Prostate gland (tissue), 2 donors: ENCODE measurements at regions of chr12 and their contacts with region 1.

Region 1: GRCh38 chr12:89709157-89709994 is 738 bp upstream of the ATP2B1 start:
- DNase-seq: peak; percentile 98
- H3K4me3 ChIP-seq: peak overlapping the region; percentile 64 to 96
- H3K27ac ChIP-seq: peak overlapping the region; percentile 95 to 98
- H3K4me1 ChIP-seq: no peaks in the 10 kb centered on the region
- H3K27me3 ChIP-seq: no peaks in the 10 kb centered on the region
- CTCF ChIP-seq: peak in 1 of 4 experiments; percentile 10
- POLR2A ChIP-seq: peak; percentile 96

Region 2: DNA sequence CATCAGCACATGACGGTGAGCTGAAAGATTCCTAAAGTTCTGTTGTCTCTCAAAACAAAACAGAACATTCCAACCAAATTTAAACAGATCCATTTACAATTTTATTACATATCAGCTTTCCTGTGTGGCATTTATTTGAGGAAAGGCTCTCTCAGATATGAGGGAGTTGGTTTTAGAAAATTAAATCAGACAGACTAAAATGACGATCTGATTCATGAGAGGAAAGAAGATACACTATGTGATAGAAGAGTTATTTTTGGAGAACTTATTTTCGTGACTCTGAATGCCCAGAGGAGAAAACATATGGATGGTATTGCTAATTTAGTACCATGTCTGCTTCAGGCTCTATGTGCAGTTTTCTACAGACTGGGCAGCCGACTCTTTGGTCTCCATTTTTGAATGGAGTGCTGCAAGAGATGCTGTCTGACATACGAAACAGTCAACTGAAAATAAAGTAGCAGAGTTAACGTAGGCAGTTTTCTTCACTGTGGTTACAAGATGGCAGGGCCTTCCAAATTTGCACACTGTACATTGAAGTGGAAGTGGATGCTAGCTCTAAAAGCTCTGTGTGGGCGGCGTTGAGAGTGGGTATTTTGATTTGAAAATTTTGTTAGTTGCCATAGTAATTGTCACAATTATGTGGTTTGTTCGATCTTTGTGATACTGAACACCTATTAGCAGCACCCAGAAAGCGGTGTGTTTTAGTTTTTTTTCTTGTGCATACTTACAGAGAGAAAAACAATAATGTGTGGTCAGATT is 154.0 kb after region 1 on chr12:
- intact Hi-C with region 1: no loop called
- DNase-seq: no peak
- H3K4me3 ChIP-seq: no peak overlapping the region
- H3K27ac ChIP-seq: peak overlapping the region; percentile 44 to 63
- H3K4me1 ChIP-seq: peaks cover 2% of the 10 kb centered on the region
- H3K27me3 ChIP-seq: no peaks in the 10 kb centered on the region
- CTCF ChIP-seq: no peak
- POLR2A ChIP-seq: no peak

Region 3: DNA sequence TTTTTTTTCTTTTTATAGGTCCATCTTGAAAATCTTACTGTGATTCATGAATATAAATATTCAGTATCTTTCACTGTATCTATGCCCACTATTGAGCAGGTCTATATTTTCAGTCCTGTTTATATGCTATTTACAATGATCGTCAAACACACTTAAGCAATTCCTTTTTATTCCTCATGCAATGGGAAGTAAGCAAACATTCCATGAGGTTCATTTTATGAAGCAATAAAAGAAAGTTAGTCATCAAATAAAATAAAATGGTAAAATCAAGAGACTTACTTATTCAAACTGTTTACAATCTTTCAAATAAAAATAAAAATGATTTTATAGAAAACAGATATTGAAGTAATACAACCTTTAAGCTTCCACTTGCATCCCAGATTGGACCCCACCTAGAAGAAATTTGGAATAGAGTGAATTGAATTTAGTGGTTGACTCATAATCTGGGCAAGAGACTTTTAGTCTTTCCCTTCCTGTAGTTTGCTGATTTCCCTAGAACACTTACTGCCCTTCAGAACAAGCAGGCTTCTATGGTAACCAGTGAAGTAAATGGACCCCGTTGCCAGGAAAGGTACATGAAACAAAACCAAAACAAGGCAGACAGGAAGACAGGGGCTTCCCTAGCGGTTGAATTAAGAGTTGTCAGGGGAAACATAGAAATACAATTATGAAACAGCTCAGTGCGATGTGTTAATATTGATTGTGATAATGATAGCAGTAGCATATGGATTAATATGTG is 240.2 kb after region 1 on chr12:
- intact Hi-C with region 1: loop called (anchors 5 kb)
- DNase-seq: peak; percentile 27
- H3K4me3 ChIP-seq: no peak overlapping the region
- H3K27ac ChIP-seq: peak overlapping the region in 1 of 2 donors; percentile 25
- H3K4me1 ChIP-seq: peaks cover 3% of the 10 kb centered on the region
- H3K27me3 ChIP-seq: peaks cover 5% of the 10 kb centered on the region
- CTCF ChIP-seq: peak in 2 of 4 experiments; percentile 7 to 45
- POLR2A ChIP-seq: no peak

Region 4: GRCh38 chr12:91250273-91250665 is 1540.9 kb after region 1 on chr12:
- intact Hi-C with region 1: no loop called
- DNase-seq: no peak
- H3K4me3 ChIP-seq: no peak overlapping the region
- H3K27ac ChIP-seq: peak overlapping the region in 1 of 2 donors; percentile 37
- H3K4me1 ChIP-seq: no peaks in the 10 kb centered on the region
- H3K27me3 ChIP-seq: no peaks in the 10 kb centered on the region
- CTCF ChIP-seq: no peak
- POLR2A ChIP-seq: no peak